ENCODE measurements at regions of chr6 and their contacts with region 1.

Region 1: GRCh38 chr6:17167327-17167979 is 65.6 kb downstream of the STMND1 start:
- DNase-seq: no peak
- H3K4me3 ChIP-seq: no peak overlapping the region
- CTCF ChIP-seq: peak; percentile 68

Region 2: DNA sequence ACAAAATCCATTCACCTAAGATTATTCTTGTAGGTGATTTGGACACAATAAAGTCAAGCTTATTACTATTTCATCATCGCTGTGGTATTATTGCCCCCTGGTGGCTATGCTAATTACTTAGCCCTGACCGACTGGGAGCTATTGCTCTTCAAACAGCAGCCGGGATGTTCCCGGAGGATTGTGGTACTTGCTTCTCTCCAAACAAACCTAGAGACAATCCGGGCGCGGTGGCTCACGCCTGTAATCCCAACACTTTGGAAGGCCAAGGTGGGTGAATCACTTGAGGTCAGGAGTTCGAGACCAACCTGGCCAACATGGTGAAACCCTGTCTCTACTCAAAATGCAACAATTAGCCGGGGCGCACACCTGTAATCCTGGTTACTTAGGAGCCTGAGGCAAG is 81.0 kb before region 1 on chr6:
- CTCF ChIA-PET with region 1: no interaction called
- POLR2A ChIA-PET with region 1: no interaction called
- DNase-seq: peak; percentile 24
- H3K4me3 ChIP-seq: no peak overlapping the region
- CTCF ChIP-seq: peak; percentile 57

Region 3: GRCh38 chr6:17178754-17179529 is 11.5 kb after region 1 on chr6:
- CTCF ChIA-PET with region 1: interaction called, 10 read pairs
- POLR2A ChIA-PET with region 1: no interaction called
- DNase-seq: no peak
- H3K4me3 ChIP-seq: no peak overlapping the region
- CTCF ChIP-seq: no peak

Region 4: GRCh38 chr6:17584241-17584803 is 416.9 kb after region 1 on chr6:
- CTCF ChIA-PET with region 1: interaction called, 28 read pairs
- POLR2A ChIA-PET with region 1: no interaction called
- DNase-seq: no peak
- H3K4me3 ChIP-seq: no peak overlapping the region; the same call in 1 of the 2 replicates
- CTCF ChIP-seq: peak; percentile 68